Activated B cell treated with CpG ODN at 0.5 μM for 24 hours (primary cell): ENCODE measurements at regions of chr2 and their contacts with region 1.

Region 1: DNA sequence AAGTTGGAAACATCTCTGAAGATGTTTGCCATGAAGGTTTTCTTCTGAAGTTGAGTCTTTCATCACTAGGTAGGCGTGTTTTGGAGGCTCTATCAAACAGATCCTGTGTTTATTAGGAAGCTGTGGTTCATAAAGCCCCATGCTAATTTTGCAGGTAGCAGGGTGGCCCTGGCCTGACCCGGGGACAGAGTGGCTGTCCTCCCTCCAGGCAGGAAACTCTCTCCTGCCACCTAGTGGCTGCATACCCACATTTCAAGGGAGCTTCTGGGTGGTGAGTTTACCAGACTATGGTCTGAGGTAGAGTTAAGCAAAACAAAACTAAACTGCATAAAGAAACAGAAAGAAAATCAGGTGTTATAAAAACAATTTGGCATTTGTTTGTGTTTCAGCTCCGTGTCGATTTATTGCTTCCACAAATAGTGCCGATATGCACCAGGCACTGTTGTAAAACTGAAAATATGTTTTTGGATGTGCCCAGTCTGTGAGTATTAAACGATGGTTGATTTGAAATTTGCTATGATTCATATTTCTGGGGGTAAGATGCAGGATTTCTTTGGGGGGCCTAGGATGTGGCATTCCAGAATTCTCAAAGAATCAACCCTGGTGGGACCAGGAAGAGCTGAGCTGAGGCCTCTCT is 26.0 kb upstream of the IL37 start:
- DNase-seq: peak; percentile 52
- ATAC-seq: peak; percentile 58
- H3K4me3 Mint-ChIP-seq: no peak overlapping the region
- H3K27ac Mint-ChIP-seq: no peak overlapping the region
- H3K4me1 Mint-ChIP-seq: peaks cover 23% of the 10 kb centered on the region
- H3K27me3 Mint-ChIP-seq: no peaks in the 10 kb centered on the region
- CTCF ChIP-seq: peak; percentile 36

Region 2: GRCh38 chr2:112601751-112602150 is 283.2 kb before region 1 on chr2:
- CTCF ChIA-PET with region 1: interaction called, 8 read pairs
- POLR2A ChIA-PET with region 1: no interaction called
- intact Hi-C with region 1: loop called (anchors 1 kb)
- DNase-seq: no peak
- ATAC-seq: no peak
- H3K4me3 Mint-ChIP-seq: no peak overlapping the region
- H3K27ac Mint-ChIP-seq: no peak overlapping the region
- H3K4me1 Mint-ChIP-seq: peaks cover 6% of the 10 kb centered on the region
- H3K27me3 Mint-ChIP-seq: no peaks in the 10 kb centered on the region
- CTCF ChIP-seq: no peak

Region 3: GRCh38 chr2:112784199-112785189 is 100.5 kb before region 1 on chr2 and contains the start of gene IL1A:
- CTCF ChIA-PET with region 1: interaction called, 9 read pairs
- POLR2A ChIA-PET with region 1: interaction called, 15 read pairs
- intact Hi-C with region 1: no loop called
- DNase-seq: no peak
- ATAC-seq: peak; percentile 32
- H3K4me3 Mint-ChIP-seq: peak within 1 kb of the TSS; percentile 73
- H3K27ac Mint-ChIP-seq: peak within 1 kb of the TSS; percentile 88
- H3K4me1 Mint-ChIP-seq: peaks cover 39% of the 10 kb centered on the region
- H3K27me3 Mint-ChIP-seq: no peaks in the 10 kb centered on the region
- CTCF ChIP-seq: no peak
- total RNA-seq, gene IL1A: 1.4 and 1.9 TPM in 2 replicates

Region 4: GRCh38 chr2:112836695-112837117 is 48.3 kb before region 1 on chr2 and contains the start of gene IL1B:
- CTCF ChIA-PET with region 1: interaction called, 8 read pairs
- POLR2A ChIA-PET with region 1: interaction called, 6 read pairs
- intact Hi-C with region 1: loop called (anchors 1 kb)
- DNase-seq: no peak
- ATAC-seq: peak; percentile 14
- H3K4me3 Mint-ChIP-seq: no peak within 1 kb of the TSS
- H3K27ac Mint-ChIP-seq: peak within 1 kb of the TSS; percentile 10
- H3K4me1 Mint-ChIP-seq: peaks cover 55% of the 10 kb centered on the region
- H3K27me3 Mint-ChIP-seq: no peaks in the 10 kb centered on the region
- CTCF ChIP-seq: no peak
- total RNA-seq, gene IL1B: 0.53 and 0.71 TPM in 2 replicates

Region 5: GRCh38 chr2:112910219-112910618 is 25.2 kb after region 1 on chr2:
- CTCF ChIA-PET with region 1: no interaction called
- POLR2A ChIA-PET with region 1: no interaction called
- intact Hi-C with region 1: no loop called
- DNase-seq: no peak
- ATAC-seq: no peak
- H3K4me3 Mint-ChIP-seq: no peak overlapping the region
- H3K27ac Mint-ChIP-seq: no peak overlapping the region
- H3K4me1 Mint-ChIP-seq: no peaks in the 10 kb centered on the region
- H3K27me3 Mint-ChIP-seq: no peaks in the 10 kb centered on the region
- CTCF ChIP-seq: no peak

Region 6: DNA sequence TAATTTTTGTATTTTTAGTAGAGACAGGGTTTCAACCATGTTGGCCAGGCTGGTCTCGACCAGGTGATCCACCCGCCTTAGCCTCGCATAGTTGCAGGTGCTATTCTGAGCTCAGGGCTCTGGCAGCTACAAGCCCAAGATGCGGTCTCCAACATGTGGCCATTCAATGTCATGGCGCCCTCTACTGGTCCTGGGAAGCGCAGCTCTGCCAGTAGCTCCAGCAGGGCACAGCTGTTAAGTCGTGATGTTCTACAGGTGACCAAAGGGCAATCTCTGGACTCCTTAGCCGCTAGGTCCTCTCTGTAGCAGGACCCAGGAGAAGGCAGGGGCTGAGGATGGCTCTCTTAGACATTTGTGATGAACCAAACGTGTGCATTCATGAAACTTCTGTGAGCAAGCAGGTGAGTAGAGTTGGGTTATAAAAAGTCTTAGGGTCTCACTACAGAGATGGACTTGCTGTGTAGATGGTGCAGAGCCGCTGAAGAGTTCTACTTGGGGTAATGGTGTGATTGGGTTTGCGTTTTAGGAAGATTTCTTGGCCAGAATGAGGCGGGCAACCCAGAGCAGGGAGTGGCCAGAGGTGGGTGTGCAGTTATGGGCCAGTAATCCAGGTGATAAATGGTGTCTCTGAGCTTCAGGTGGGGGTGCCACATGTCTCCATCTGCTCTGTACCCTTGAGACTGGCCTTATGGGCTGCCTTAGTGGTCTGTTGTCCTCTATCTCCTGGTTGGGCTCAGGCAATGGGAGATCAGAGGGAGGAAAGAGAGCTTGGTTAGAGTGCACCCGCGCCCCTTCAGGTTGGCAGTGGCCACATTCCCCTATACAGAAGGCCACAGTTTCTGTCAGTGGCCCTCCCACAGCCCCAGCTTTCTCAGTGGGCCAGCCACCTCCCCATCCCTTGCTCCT is 57.0 kb after region 1 on chr2:
- CTCF ChIA-PET with region 1: interaction called, 14 read pairs
- POLR2A ChIA-PET with region 1: no interaction called
- intact Hi-C with region 1: no loop called
- DNase-seq: peak; percentile 29
- ATAC-seq: peak; percentile 71
- H3K4me3 Mint-ChIP-seq: no peak overlapping the region
- H3K27ac Mint-ChIP-seq: no peak overlapping the region
- H3K4me1 Mint-ChIP-seq: no peaks in the 10 kb centered on the region
- H3K27me3 Mint-ChIP-seq: peaks cover 7% of the 10 kb centered on the region
- CTCF ChIP-seq: no peak